ENCODE measurements at regions of chr6 and their contacts with region 1.

Region 1: GRCh38 chr6:108113557-108114519 is 39.3 kb upstream of the OSTM1 start:
- DNase-seq: peak; percentile 28
- H3K4me3 ChIP-seq: peak overlapping the region in 1 of 2 donors; percentile 50
- H3K27ac ChIP-seq: no peak overlapping the region
- H3K4me1 ChIP-seq: peaks cover 33% of the 10 kb centered on the region
- H3K27me3 ChIP-seq: no peaks in the 10 kb centered on the region
- CTCF ChIP-seq: peak; percentile 42 to 62 (median 58)
- POLR2A ChIP-seq: no peak

Region 2: DNA sequence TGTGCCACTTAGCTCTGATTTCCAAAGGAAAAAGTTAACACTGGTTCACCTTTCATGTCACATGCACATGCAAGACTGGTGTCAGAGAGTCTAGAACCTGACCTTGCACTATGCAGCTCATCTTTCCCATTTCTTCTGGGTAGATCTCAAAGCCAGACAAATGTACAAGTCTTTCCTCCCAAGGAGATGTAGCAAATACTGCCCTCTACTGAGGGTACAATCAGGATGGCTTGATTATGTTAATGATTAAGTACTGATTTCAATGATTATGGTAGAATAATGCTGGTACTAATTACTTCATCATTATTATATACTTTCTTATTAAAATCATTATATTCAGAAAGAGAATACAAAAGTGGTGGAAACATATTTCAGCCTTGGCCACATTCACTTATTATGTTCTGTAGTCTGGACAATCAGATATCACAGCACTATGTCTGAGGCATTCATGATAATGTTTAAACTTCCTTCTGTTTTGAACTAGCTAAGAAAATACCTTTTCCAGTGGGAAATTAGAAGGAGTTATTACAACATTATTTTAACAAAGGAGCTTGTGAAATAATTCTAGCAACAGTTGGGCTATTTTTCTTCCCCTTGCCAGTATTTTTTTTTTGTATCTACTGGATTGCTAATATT is 378.4 kb after region 1 on chr6:
- intact Hi-C with region 1: loop called (anchors 10 kb)
- DNase-seq: no peak
- H3K4me3 ChIP-seq: no peak overlapping the region
- H3K27ac ChIP-seq: no peak overlapping the region
- H3K4me1 ChIP-seq: no peaks in the 10 kb centered on the region
- H3K27me3 ChIP-seq: no peaks in the 10 kb centered on the region
- CTCF ChIP-seq: peak; percentile 14 to 53 (median 19)
- POLR2A ChIP-seq: no peak

Region 3: GRCh38 chr6:108526739-108527174 is 412.9 kb after region 1 on chr6:
- intact Hi-C with region 1: loop called (anchors 5 kb)
- DNase-seq: peak; percentile 22
- H3K4me3 ChIP-seq: no peak overlapping the region
- H3K27ac ChIP-seq: no peak overlapping the region
- H3K4me1 ChIP-seq: no peaks in the 10 kb centered on the region
- H3K27me3 ChIP-seq: no peaks in the 10 kb centered on the region
- CTCF ChIP-seq: peak; percentile 61 to 81 (median 78)
- POLR2A ChIP-seq: no peak

Region 4: DNA sequence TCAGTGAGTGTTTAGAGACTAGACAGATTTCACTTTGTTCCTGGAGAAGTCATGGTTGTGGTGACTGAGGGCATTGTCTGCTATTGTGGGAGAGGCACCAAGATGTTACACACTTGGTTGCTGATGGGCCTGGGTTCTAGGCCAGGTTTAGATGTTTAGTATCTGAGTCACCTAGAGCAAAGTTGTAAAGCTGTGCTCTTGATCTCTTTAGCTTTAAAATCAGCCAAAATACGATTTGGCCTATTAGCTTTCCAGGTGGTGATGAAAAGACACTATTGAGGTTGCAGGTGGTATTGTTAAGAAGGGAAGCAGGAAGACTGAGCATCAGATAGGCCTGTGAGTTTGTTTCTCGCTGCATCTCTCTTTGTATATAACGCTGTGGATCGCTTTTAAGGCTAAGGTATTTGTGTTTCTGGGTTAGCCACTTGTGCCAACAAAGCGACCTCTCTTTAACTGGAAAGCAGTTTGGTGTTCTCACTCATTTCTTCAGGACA is 495.5 kb after region 1 on chr6:
- intact Hi-C with region 1: no loop called
- DNase-seq: no peak
- H3K4me3 ChIP-seq: no peak overlapping the region
- H3K27ac ChIP-seq: peak overlapping the region; percentile 9 to 58
- H3K4me1 ChIP-seq: peaks cover 70% of the 10 kb centered on the region
- H3K27me3 ChIP-seq: no peaks in the 10 kb centered on the region
- CTCF ChIP-seq: no peak
- POLR2A ChIP-seq: no peak